H1 (cell line): ENCODE measurements at regions of chr19 and their contacts with region 1.

Region 1: DNA sequence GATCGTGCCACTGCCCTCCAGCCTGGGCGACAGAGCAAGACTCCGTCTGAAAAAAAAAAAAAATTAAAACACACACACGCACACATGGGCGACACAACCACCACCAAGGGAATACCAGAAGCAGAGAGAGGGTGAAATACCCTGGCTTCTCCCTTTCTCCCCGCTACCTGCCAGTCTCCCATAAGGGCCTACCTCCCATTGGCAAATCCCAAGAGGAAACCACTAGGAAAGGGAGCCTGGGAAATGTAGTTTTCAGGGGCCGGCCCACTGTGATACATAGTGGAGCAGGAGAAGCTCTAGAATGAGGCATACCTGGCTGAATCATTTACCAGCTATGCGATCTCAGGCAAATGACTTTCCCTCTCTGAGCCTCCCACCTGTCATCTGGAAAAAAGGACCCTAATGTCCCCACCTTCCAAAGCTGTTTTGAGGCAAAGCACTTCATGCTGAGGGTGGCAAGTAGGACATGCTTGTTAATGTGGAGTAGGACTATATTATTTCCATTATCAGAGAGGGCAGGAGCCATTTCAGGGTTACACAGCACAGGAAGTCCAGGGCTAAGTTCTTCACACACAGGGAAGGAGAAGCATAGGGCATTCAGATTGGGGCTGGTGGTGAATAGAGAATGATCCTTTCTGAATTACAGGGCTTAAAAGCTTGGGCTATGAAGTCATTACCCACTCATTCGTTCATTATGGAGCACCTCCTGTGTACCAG is 14.3 kb upstream of the HNRNPUL1 start:
- DNase-seq: no peak
- H3K4me3 ChIP-seq: no peak overlapping the region
- H3K27ac ChIP-seq: no peak overlapping the region
- H3K4me1 ChIP-seq: no peaks in the 10 kb centered on the region
- H3K27me3 ChIP-seq: no peaks in the 10 kb centered on the region
- CTCF ChIP-seq: no peak
- EP300 ChIP-seq: no peak
- POLR2A ChIP-seq: no peak
- RAD21 ChIP-seq: no peak

Region 2: GRCh38 chr19:41076286-41076685 is 173.6 kb before region 1 on chr19:
- CTCF ChIA-PET with region 1: no interaction called
- POLR2A ChIA-PET with region 1: no interaction called
- DNase-seq: no peak
- H3K4me3 ChIP-seq: no peak overlapping the region
- H3K27ac ChIP-seq: no peak overlapping the region
- H3K4me1 ChIP-seq: no peaks in the 10 kb centered on the region
- H3K27me3 ChIP-seq: no peaks in the 10 kb centered on the region
- CTCF ChIP-seq: no peak
- EP300 ChIP-seq: no peak
- POLR2A ChIP-seq: no peak
- RAD21 ChIP-seq: no peak

Region 3: DNA sequence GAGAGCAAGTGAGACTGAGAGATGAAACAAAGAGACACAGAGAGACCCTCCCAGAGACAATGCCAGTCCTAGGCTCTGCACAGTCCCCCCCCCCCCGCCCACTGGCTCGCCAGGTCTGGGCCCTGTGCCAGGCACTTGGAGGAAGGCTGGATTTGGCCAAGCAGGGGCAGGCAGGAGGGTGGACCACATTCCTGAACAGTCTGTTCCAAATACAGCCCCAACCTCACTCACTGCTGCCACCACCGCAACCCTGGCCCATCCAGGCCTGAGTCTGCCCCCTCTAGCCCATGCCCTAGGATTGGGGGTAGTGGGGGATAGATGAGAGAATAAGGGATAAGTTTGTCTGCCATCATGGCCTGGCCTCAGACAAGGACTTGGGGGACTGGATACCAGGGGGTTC is 116.6 kb before region 1 on chr19:
- CTCF ChIA-PET with region 1: no interaction called
- POLR2A ChIA-PET with region 1: no interaction called
- DNase-seq: no peak
- H3K4me3 ChIP-seq: no peak overlapping the region
- H3K27ac ChIP-seq: no peak overlapping the region
- H3K4me1 ChIP-seq: peaks cover 0 to 10% (median 3%) of the 10 kb centered on the region in 4 experiments; a peak in 3 of 7 replicates
- H3K27me3 ChIP-seq: peaks cover 0 to 8% (median 5%) of the 10 kb centered on the region in 4 experiments; a peak in 3 of 7 replicates
- CTCF ChIP-seq: no peak
- EP300 ChIP-seq: no peak
- POLR2A ChIP-seq: no peak
- RAD21 ChIP-seq: no peak

Region 4: DNA sequence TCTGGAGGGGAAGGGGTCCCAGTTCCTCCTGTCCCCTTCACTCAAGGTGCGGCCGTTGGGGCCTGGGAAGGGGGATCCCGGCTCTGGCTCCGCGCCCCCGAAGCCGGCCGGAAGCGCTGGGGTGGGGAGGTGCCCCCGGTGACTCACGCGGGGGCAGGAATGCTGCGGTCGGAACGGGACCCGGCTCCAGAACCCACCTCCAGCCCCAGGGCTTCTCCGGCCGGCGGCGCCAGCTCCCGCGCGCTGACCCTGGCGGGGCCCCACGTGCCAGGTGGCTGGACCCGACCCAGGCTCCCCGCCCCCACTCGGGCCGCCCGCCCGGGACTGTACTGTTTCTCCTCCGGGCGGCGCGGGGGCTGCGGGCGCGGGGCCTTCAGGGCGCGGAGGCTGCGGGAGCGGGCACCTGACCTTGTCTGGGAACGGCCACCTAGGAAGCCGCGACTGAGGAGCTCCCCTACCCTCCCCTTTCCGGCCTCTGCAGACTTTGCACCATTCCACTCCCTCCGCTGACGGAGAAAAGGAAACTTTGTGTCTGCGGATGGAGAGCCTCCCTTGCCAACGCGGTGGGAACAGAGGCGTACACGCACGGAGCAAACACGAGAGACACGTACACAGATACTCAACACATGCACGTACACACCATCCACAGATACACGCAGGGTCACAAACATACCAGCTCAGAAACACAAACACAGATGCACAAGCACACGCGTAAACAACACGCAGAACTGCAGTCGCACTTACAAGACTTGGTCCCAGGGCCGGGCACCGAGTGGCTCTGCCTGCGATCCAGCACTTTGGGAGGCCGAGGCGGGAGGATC is 23.6 kb before region 1 on chr19:
- CTCF ChIA-PET with region 1: interaction called, 8 read pairs
- POLR2A ChIA-PET with region 1: interaction called, 15 read pairs
- DNase-seq: peak in 1 of 2 experiments; percentile 79
- H3K4me3 ChIP-seq: peak overlapping the region; percentile 24 to 56 (median 38)
- H3K27ac ChIP-seq: peak overlapping the region; percentile 54
- H3K4me1 ChIP-seq: peaks cover 8 to 26% (median 17%) of the 10 kb centered on the region in 4 experiments
- H3K27me3 ChIP-seq: no peaks in the 10 kb centered on the region
- CTCF ChIP-seq: no peak
- EP300 ChIP-seq: no peak
- POLR2A ChIP-seq: peak in 1 of 2 experiments; percentile 63; a peak in 2 of 3 replicates
- RAD21 ChIP-seq: no peak

Region 5: DNA sequence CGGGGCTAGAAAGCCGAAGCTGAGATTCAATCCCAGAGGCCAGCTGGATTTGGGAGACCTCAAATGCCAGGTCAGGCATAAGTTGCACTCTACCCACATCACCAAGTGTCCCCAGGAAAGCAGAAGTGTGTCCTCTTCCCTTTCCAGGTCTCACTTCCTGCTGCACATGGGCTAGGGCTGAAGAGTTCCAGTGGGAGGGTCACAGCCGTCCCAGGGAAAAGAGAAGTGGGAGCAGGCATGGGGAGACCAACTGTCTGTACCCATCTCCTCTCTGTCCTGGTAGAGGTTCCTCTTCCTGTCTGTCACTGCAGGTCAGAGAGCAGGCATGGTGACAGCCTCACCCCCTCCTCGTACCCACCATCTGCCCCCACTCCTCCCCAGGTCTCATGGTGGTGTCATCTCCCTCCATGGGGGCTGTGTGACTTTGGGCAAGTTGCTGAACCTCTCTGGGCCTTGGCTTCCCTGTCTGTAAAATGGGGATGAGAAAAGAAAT is 16.1 kb before region 1 on chr19:
- CTCF ChIA-PET with region 1: interaction called, 8 read pairs
- POLR2A ChIA-PET with region 1: interaction called, 28 read pairs
- DNase-seq: no peak
- H3K4me3 ChIP-seq: no peak overlapping the region
- H3K27ac ChIP-seq: no peak overlapping the region
- H3K4me1 ChIP-seq: no peaks in the 10 kb centered on the region; a peak in 1 of 7 replicates
- H3K27me3 ChIP-seq: no peaks in the 10 kb centered on the region
- CTCF ChIP-seq: no peak
- EP300 ChIP-seq: no peak
- POLR2A ChIP-seq: no peak
- RAD21 ChIP-seq: no peak